ENCODE measurements at regions of chr1 and their contacts with region 1.

Region 1: GRCh38 chr1:63522891-63523728 is at the starts of genes EFCAB7 and ITGB3BP:
- DNase-seq: peak; percentile 88
- ATAC-seq: peak; percentile 92
- H3K4me3 Mint-ChIP-seq: peak within 1 kb of the TSS; percentile 97
- H3K27ac Mint-ChIP-seq: peak within 1 kb of the TSS; percentile 98
- H3K4me1 Mint-ChIP-seq: peaks cover 26% of the 10 kb centered on the region
- H3K27me3 Mint-ChIP-seq: no peaks in the 10 kb centered on the region
- total RNA-seq, gene EFCAB7: 7.7 to 9.5 TPM
- total RNA-seq, gene ITGB3BP: 69.5 to 74.4 TPM

Region 2: GRCh38 chr1:63537940-63538339 is 14.8 kb after region 1 on chr1:
- CTCF ChIA-PET with region 1: interaction called, 12 read pairs
- POLR2A ChIA-PET with region 1: interaction called, 3 read pairs
- DNase-seq: no peak
- ATAC-seq: no peak
- H3K4me3 Mint-ChIP-seq: no peak overlapping the region
- H3K27ac Mint-ChIP-seq: no peak overlapping the region
- H3K4me1 Mint-ChIP-seq: no peaks in the 10 kb centered on the region
- H3K27me3 Mint-ChIP-seq: no peaks in the 10 kb centered on the region

Measured in activated CD8-positive, alpha-beta T cell treated with anti-CD3 and anti-CD28 coated beads, Interleukin-2, amount 10 ng/mL, durations not matched to agents 7 days and 5 days (primary cell).